ENCODE measurements at regions of chr14 and their contacts with region 1.

Region 1: DNA sequence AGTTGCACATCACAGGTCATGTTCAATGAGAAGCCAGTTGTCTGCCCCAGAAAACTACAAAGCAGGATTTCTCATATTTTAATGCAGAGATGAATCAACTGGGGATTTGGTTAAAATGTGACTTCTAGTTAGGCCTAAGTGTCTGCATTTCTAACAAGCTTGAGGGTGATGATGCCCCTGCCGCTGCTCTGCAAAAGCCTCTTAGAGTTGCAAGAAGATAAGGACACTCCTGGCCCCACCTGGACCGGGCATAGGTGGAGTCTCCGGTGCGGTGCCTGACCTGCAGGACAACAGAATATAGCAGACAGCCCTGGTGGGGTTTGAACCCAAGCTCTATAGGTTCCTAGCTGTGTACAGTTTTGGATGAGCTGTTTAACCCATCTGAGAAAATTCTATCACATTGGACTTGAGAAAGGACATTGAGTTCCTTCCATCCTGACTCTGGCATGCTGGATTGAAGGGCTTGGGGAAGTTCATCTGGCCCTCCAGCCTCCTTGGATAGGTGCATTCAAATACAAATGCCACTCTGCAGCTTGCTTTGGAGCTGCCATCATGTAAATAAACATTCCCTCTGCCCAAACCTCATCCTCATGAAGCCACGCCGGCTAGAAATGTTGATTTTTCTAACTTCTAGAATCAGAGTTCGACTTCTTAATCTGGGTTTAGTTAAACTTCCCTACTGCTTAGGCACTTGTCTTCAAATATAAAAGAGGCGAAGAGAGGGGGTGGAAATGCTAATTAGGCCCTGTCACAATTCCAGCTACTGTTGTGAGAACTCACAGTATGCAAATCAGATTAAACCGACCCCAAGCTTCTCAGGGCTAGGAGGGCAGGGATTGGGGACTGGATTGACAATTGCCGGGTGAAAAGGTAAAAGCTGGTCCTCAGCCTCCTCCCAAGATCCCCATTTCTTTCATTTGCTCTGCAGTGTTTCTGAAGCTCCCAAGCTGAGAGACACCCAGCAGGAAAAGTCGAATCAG is 1225.6 kb downstream of the VRK1 start:
- DNase-seq: no peak
- ATAC-seq: no peak
- H3K4me3 ChIP-seq: no peak overlapping the region
- H3K27ac ChIP-seq: no peak overlapping the region
- H3K4me1 ChIP-seq: no peaks in the 10 kb centered on the region
- H3K27me3 ChIP-seq: peaks cover 0 to 3% (median 0%) of the 10 kb centered on the region in 3 donors
- CTCF ChIP-seq: no peak

Region 2: DNA sequence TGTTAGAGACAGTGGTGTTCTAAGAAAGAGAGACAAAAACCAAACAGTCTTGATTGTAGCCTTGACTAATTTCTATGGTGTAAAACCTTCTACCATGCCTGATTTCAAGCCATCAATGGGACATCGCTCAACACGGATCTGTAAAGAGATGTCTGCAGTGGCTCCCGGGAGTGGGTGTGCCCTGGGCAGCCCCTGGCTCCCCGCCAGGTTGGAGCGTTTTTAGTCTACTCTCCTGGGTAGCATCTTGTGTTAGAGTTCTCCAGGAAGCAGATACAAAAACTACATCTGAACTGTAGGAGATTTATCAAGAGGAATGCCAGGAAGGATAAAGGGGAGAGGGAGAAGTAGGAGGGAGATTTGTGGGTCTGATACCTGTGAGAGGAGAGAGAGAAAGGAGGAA is 36.3 kb after region 1 on chr14:
- intact Hi-C with region 1: no loop called
- DNase-seq: no peak
- ATAC-seq: no peak
- H3K4me3 ChIP-seq: no peak overlapping the region
- H3K27ac ChIP-seq: no peak overlapping the region
- H3K4me1 ChIP-seq: no peaks in the 10 kb centered on the region
- H3K27me3 ChIP-seq: no peaks in the 10 kb centered on the region
- CTCF ChIP-seq: no peak

Region 3: GRCh38 chr14:98069712-98070171 is 46.9 kb after region 1 on chr14:
- intact Hi-C with region 1: loop called in 1 of 2 experiments (anchors 2 kb)
- DNase-seq: no peak
- ATAC-seq: peak in 3 of 4 donors; percentile 50 to 61 (median 59)
- H3K4me3 ChIP-seq: no peak overlapping the region
- H3K27ac ChIP-seq: no peak overlapping the region
- H3K4me1 ChIP-seq: no peaks in the 10 kb centered on the region
- H3K27me3 ChIP-seq: no peaks in the 10 kb centered on the region
- CTCF ChIP-seq: no peak

Measured in psoas muscle (tissue), 8 donors.